Calu3 (cell line): ENCODE measurements at regions of chrX and their contacts with region 1.

Region 1: GRCh38 chrX:15143050-15143824 is 126.6 kb downstream of the ASB9 start:
- DNase-seq: peak; percentile 56
- H3K4me3 Mint-ChIP-seq: no peak overlapping the region
- H3K27ac Mint-ChIP-seq: no peak overlapping the region
- H3K4me1 Mint-ChIP-seq: peaks cover 13% of the 10 kb centered on the region
- H3K27me3 Mint-ChIP-seq: no peaks in the 10 kb centered on the region
- CTCF ChIP-seq: peak; percentile 64

Region 2: DNA sequence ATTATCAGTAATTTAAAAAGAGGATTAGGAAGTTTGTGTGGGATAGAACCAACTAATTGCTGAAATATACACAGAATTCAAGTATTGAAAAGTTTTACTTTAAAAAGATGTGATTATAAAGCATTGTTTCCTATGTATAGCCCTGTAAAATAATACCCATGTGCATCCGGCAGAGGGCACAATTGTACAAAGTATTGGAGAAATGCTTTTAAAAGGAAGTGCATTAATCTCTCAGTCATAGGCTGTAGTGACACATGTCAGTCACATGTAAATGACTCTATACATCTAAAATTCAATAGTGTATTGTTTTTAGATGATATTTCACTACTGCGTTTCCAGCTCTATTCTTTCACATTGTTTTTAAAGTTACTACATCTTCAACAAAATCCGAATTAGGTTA is 1103.9 kb before region 1 on chrX:
- CTCF ChIA-PET with region 1: no interaction called
- intact Hi-C with region 1: loop called (anchors 2 kb)
- DNase-seq: peak; percentile 56
- H3K4me3 Mint-ChIP-seq: no peak overlapping the region
- H3K27ac Mint-ChIP-seq: no peak overlapping the region
- H3K4me1 Mint-ChIP-seq: no peaks in the 10 kb centered on the region
- H3K27me3 Mint-ChIP-seq: no peaks in the 10 kb centered on the region
- CTCF ChIP-seq: peak; percentile 34

Region 3: GRCh38 chrX:14095702-14096101 is 1047.5 kb before region 1 on chrX:
- CTCF ChIA-PET with region 1: no interaction called
- intact Hi-C with region 1: loop called (anchors 5 kb)
- DNase-seq: peak; percentile 33
- H3K4me3 Mint-ChIP-seq: no peak overlapping the region
- H3K27ac Mint-ChIP-seq: no peak overlapping the region
- H3K4me1 Mint-ChIP-seq: no peaks in the 10 kb centered on the region
- H3K27me3 Mint-ChIP-seq: peaks cover 12% of the 10 kb centered on the region
- CTCF ChIP-seq: peak; percentile 53

Region 4: DNA sequence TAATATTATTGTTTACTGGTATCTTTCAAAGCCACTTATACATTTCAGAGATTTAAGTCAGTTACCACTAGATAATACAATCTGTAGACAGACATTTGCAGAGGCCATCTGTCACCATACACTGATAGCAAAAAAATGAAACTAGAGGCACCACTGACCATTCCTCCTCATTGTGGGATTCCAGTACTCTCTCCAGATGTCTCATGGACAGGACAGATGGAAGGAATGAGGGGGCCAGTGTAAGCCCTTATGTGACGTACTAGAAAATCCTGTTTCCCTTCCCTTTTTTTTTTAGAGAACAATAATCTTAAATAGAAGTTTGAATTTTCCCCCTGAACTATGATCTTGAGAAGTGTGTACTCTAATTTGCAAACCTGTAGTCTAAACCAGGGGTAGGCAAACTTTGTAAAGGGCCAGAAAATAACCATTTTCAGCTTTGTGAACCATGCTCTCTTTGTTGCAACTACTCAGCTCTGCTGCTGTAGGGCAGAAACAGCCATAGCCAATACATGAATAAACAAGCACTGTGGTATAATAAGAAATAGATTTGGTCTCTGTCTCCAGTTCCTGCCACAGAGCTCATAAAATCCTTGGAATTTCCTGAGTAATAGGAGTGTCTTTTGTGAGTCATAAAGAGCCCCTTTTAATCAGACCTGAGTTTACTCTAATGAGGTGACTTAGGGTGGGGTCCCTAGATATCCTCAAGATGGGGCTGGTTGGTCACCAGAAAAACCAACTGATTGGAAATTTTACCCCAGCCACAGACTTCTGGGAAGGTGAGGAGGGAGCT is 179.6 kb before region 1 on chrX:
- CTCF ChIA-PET with region 1: interaction called, 3 read pairs
- intact Hi-C with region 1: loop called (anchors 10 kb)
- DNase-seq: no peak
- H3K4me3 Mint-ChIP-seq: no peak overlapping the region
- H3K27ac Mint-ChIP-seq: peak overlapping the region; percentile 66
- H3K4me1 Mint-ChIP-seq: peaks cover 9% of the 10 kb centered on the region
- H3K27me3 Mint-ChIP-seq: no peaks in the 10 kb centered on the region
- CTCF ChIP-seq: no peak